WTC11 (cell line): ENCODE measurements at regions of chr1 and their contacts with region 1.

Region 1: DNA sequence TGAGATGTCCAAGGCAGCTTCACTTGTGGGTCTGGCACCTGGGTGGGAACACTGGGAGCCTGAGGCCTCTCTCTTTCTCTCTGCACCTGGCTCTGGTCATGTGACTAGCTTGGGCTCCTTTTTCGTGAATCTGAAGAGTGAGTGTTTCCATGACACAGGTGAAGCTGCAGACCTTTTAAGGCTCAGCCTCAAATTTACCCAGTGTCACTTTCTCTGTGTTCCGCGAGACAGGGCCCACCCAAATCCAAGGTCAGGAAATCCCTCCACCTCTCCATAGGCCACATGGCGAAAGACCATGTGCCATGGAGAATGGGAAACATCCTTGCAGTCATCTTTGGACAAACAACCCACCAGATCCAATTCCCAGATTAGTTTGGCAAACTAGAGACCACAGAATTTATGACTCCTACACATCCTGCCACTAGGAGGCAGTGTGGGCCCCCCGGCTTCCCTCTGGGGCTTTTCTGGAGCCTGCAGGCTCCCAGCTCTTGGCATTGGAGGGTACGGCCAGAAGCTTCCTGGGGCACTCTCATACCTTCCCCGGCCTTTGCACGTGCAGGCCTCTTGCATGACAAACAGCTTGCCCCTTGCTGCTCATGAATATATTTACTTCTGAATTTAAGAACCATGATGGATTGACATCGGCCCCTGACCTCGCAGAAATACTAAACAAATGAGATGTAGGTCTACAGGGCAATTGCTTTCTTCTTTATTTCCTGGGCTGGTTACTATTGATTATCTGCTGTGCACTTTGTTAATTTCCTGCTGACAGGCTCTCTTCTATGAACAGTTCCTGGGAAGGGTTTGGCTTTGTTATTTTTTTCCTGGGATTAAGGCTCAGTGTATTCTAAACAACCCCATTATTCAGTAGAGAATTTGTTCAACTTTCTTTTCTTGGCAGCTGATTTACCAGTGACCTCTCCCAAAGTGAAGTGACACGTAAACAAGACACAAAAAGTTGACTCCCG is 180.7 kb downstream of the KAZN start:
- DNase-seq: peak; percentile 85
- ATAC-seq: peak; percentile 81
- H3K4me3 Mint-ChIP-seq: no peak overlapping the region
- H3K27ac Mint-ChIP-seq: peak overlapping the region; percentile 69; the same call in 1 of the 2 replicates
- H3K4me1 Mint-ChIP-seq: peaks cover 60% of the 10 kb centered on the region
- H3K27me3 Mint-ChIP-seq: no peaks in the 10 kb centered on the region
- CTCF ChIP-seq: peak; percentile 83

Region 2: GRCh38 chr1:14522926-14523241 is 256.3 kb before region 1 on chr1:
- CTCF ChIA-PET with region 1: no interaction called
- POLR2A ChIA-PET with region 1: no interaction called
- DNase-seq: peak; percentile 18
- ATAC-seq: peak; percentile 55
- H3K4me3 Mint-ChIP-seq: no peak overlapping the region
- H3K27ac Mint-ChIP-seq: no peak overlapping the region
- H3K4me1 Mint-ChIP-seq: no peaks in the 10 kb centered on the region
- H3K27me3 Mint-ChIP-seq: peaks cover 27% of the 10 kb centered on the region
- CTCF ChIP-seq: no peak

Region 3: DNA sequence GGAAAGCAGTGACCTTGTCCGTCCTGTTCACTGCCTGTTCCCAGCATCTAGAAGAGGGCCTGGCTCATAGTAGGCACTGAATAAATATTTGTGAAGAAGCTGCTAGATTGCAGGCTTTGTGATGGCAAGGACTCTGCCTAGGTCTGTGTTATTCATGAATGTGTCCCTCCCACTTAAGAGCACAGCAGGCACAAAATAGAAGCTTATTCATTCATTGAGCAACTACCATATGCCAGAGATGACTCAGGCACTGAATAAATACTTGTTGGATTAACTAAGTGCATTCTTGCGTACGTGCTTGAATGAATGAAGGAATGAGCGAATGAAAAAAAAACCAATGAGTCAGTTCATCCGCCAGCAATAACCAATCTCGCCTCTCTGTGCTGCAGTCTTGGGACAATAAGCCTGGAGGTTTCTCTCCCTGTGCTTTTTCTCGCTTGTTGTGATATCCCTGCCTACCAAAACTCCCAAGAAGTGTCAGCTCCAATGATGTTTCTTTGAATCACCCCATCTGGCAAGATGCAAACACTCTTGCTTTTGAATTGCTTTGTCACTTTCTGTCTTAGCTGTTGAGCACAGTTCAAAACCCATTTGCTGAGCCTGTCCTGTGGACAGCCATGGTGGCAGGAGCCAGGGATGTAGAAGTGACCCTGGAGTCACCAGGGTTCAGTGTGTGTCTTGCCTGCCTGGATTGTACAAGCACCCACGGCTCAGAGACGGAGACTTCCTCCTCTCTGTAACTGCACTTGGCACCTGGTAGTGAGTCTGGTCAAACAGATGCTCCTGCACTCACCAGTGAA is 36.8 kb before region 1 on chr1:
- CTCF ChIA-PET with region 1: interaction called, 20 read pairs
- POLR2A ChIA-PET with region 1: no interaction called
- DNase-seq: no peak
- ATAC-seq: peak; percentile 58
- H3K4me3 Mint-ChIP-seq: no peak overlapping the region
- H3K27ac Mint-ChIP-seq: peak overlapping the region; percentile 84
- H3K4me1 Mint-ChIP-seq: peaks cover 65% of the 10 kb centered on the region
- H3K27me3 Mint-ChIP-seq: peaks cover 18% of the 10 kb centered on the region
- CTCF ChIP-seq: no peak

Region 4: GRCh38 chr1:14755518-14756252 is 23.5 kb before region 1 on chr1:
- CTCF ChIA-PET with region 1: interaction called, 25 read pairs
- POLR2A ChIA-PET with region 1: no interaction called
- DNase-seq: no peak
- ATAC-seq: no peak
- H3K4me3 Mint-ChIP-seq: no peak overlapping the region
- H3K27ac Mint-ChIP-seq: no peak overlapping the region
- H3K4me1 Mint-ChIP-seq: peaks cover 50% of the 10 kb centered on the region
- H3K27me3 Mint-ChIP-seq: no peaks in the 10 kb centered on the region
- CTCF ChIP-seq: no peak

Region 5: GRCh38 chr1:14765773-14766172 is 13.4 kb before region 1 on chr1:
- CTCF ChIA-PET with region 1: interaction called, 19 read pairs
- POLR2A ChIA-PET with region 1: no interaction called
- DNase-seq: no peak
- ATAC-seq: no peak
- H3K4me3 Mint-ChIP-seq: no peak overlapping the region
- H3K27ac Mint-ChIP-seq: no peak overlapping the region
- H3K4me1 Mint-ChIP-seq: peaks cover 83% of the 10 kb centered on the region
- H3K27me3 Mint-ChIP-seq: 0 out of 2 replicates have a peak, but pooled peaks cover 2% of the 10 kb centered on the region
- CTCF ChIP-seq: no peak

Region 6: DNA sequence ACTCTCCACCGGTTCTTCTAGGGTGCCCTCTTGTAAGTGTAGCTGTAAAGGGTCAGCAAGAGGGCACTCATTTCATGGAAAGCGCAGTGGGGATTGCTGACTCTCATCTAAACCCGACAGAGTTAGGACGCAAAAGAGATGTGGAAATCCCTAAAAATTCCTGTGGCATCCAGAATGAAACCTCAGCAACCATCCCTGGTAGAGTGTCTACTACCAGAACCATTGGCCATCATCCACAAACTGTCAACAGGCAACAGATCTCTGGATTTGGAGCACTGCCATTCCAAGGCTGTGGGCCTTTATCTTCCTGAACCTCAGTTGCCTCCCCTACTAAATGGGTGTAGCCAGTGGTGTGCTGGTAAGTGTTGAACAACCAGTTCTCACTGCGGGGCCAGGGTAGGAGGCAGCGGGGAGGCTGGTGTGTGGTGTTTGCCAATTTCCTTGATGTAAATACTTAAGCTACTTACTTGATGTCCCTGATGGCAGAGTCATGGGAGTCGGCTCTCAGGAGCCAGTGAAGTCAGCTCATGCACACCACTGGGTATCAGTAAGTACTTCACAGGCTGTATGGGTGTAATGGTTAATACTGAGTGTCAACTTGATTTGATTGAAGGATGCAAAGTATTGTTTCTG is 15.1 kb after region 1 on chr1:
- CTCF ChIA-PET with region 1: interaction called, 12 read pairs
- POLR2A ChIA-PET with region 1: interaction called, 6 read pairs
- DNase-seq: no peak
- ATAC-seq: no peak
- H3K4me3 Mint-ChIP-seq: no peak overlapping the region
- H3K27ac Mint-ChIP-seq: no peak overlapping the region
- H3K4me1 Mint-ChIP-seq: peaks cover 3% of the 10 kb centered on the region; the same call in 1 of the 2 replicates
- H3K27me3 Mint-ChIP-seq: no peaks in the 10 kb centered on the region
- CTCF ChIP-seq: no peak

Region 7: DNA sequence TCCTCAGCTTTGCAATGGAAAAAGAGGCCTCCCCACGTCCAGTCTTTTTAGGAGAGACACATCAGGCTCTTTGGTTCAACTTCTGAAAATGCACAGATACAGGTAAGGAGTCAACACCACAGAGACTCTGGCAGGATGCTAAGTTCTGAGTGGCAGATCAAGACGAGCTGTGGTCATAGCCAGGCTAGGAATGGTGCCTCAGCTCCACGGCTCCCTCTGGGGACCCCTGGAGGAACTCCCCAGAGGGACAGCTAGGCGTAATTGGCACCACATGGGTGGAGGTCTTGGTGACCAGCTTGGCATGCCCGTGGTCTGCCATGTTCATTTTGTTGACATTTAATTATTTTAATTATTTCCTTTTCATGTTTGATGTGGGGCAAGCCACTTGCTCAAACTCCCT is 25.4 kb after region 1 on chr1:
- CTCF ChIA-PET with region 1: interaction called, 37 read pairs
- POLR2A ChIA-PET with region 1: no interaction called
- DNase-seq: peak; percentile 58
- ATAC-seq: peak; percentile 91
- H3K4me3 Mint-ChIP-seq: no peak overlapping the region
- H3K27ac Mint-ChIP-seq: no peak overlapping the region
- H3K4me1 Mint-ChIP-seq: no peaks in the 10 kb centered on the region
- H3K27me3 Mint-ChIP-seq: no peaks in the 10 kb centered on the region; the same call in none of the 2 replicates
- CTCF ChIP-seq: peak; percentile 56

Region 8: GRCh38 chr1:14862114-14862771 is 83.1 kb after region 1 on chr1:
- CTCF ChIA-PET with region 1: no interaction called
- POLR2A ChIA-PET with region 1: no interaction called
- DNase-seq: no peak
- ATAC-seq: no peak
- H3K4me3 Mint-ChIP-seq: no peak overlapping the region
- H3K27ac Mint-ChIP-seq: no peak overlapping the region
- H3K4me1 Mint-ChIP-seq: peaks cover 14% of the 10 kb centered on the region
- H3K27me3 Mint-ChIP-seq: no peaks in the 10 kb centered on the region
- CTCF ChIP-seq: no peak

Region 9: GRCh38 chr1:14887764-14888350 is 108.7 kb after region 1 on chr1:
- CTCF ChIA-PET with region 1: no interaction called
- POLR2A ChIA-PET with region 1: no interaction called
- DNase-seq: no peak
- ATAC-seq: peak; percentile 41; the same call in 1 of the 2 replicates
- H3K4me3 Mint-ChIP-seq: no peak overlapping the region
- H3K27ac Mint-ChIP-seq: no peak overlapping the region
- H3K4me1 Mint-ChIP-seq: peaks cover 12% of the 10 kb centered on the region
- H3K27me3 Mint-ChIP-seq: no peaks in the 10 kb centered on the region; the same call in 1 of the 2 replicates
- CTCF ChIP-seq: no peak

Region 10: GRCh38 chr1:15028102-15028501 is 248.9 kb after region 1 on chr1:
- CTCF ChIA-PET with region 1: interaction called, 15 read pairs
- POLR2A ChIA-PET with region 1: no interaction called
- DNase-seq: no peak
- ATAC-seq: no peak
- H3K4me3 Mint-ChIP-seq: no peak overlapping the region
- H3K27ac Mint-ChIP-seq: no peak overlapping the region
- H3K4me1 Mint-ChIP-seq: peaks cover 51% of the 10 kb centered on the region
- H3K27me3 Mint-ChIP-seq: no peaks in the 10 kb centered on the region
- CTCF ChIP-seq: no peak